Cardiac septum (tissue), 1 donor: ENCODE measurements at regions of chr2 and their contacts with region 1.

Region 1: DNA sequence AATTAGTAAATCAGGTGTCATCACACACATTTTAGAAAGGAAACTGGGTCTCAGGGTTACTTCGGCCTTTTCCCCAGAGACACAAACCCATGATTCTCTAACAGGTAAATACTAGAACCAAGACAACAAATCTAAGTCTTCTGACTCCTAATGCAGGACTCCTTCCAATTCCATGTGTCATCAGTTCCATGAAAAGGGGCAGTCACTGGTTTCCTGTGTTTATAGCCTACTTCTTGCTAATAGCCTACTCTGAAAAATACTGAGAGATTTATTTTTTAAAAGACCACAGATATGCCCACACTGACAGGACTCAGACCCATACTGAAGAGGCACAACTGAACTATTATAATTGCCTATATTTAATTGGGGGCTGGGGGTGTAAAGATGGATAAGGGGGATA is 33.0 kb downstream of the RAB1A start:
- DNase-seq: no peak

Region 2: DNA sequence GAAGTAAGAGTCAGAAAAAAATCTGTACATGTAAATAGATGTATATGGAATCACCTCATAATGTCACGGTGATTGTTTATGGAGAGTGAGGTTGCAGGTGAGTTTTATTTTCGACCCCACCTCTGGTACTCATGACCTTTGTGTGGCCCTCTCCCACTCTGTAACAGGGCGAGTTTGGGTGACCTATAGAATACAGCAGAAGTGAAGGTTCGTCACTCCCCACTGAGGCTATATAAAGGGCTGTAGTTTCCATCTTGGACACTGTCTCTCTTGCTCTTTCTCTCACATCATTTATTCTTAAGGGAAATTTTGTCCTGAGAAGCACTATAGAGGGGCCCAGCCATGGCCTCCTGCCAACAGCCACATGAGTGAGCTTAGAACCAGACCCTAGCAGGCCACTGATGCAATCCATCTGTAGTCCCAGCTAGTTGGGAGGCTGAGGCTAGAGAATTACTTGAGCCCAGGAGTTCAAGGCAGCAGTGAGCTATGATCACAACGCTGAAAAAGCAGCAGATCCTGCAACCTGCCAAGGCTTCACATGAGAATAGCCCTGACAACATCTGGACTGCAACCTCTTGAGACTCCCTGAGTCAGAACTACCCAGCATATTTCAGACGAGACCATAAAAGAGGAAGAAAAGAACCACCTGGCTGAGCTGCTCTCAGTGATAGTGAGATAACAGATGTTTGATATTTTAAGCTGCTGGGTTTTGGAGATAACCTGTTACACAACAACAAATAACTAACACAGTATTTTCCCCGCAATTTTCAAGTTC is 182.0 kb before region 1 on chr2:
- intact Hi-C with region 1: no loop called
- DNase-seq: peak; percentile 54

Region 3: DNA sequence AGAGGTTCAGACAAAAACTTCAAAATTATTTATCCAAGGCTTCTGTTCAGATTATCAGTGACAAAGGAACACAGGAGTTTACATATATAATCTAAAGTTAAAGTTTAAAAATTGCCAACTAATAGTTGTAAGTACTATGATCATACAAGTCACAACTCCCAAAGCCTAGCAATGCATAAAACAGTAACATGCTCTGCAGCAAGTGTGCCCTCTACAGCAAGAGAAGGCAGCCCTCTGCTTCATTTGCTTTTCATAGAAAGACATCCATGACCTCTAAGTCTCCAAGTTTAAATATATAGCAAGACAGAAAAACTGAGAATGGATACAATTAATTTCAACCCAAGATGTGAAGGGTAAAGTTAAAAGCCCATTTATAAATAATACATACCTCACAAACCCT is 19.7 kb after region 1 on chr2:
- intact Hi-C with region 1: loop called (anchors 1 kb)
- DNase-seq: no peak